Dendritic cell treated with granulocyte-macrophage colony-stimulating factor and Interleukin-4, amounts not matched to agents 40 ng/mL and 50 ng/mL, for 4 days (primary cell): ENCODE measurements at regions of chr2 and their contacts with region 1.

Region 1: DNA sequence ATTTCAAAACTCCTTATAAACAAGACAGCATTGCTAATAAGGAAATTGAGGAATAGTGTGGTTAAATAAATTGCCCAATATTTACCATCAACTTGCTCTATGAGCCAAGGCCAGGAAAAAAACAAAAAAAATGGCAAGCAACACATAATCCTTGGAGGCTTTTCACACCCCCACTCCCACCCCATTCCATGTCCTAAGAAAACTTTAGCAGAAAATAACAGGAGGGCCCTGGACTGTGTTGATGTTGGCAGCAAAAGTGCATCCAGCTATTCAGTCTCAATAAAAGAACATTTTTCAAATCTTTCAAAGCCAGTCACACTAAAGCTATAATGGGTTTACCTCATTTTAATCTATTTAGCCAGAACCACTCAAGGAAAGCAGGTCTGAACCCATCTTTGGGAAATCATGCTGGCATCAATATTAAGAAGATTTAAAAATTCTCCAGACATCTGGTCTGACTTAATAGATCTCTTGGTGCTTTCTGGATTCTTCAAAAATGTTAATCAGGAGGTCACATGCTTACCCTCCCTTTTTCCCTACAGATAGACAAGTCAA is 34.6 kb upstream of the STK17B start:
- H3K4me3 Mint-ChIP-seq: no peak overlapping the region
- H3K27ac Mint-ChIP-seq: no peak overlapping the region
- H3K4me1 Mint-ChIP-seq: peaks cover 19% of the 10 kb centered on the region
- H3K27me3 Mint-ChIP-seq: no peaks in the 10 kb centered on the region

Region 2: GRCh38 chr2:196263181-196263747 is 57.3 kb after region 1 on chr2:
- intact Hi-C with region 1: loop called (anchors 1 kb)
- H3K4me3 Mint-ChIP-seq: peak overlapping the region; percentile 32
- H3K27ac Mint-ChIP-seq: peak overlapping the region; percentile 89
- H3K4me1 Mint-ChIP-seq: peaks cover 38% of the 10 kb centered on the region
- H3K27me3 Mint-ChIP-seq: no peaks in the 10 kb centered on the region